ENCODE measurements at regions of chr17 and their contacts with region 1.

Region 1: GRCh38 chr17:7989781-7990655 is 12.4 kb upstream of the GUCY2D start:
- DNase-seq: peak; percentile 40 to 92
- H3K4me3 ChIP-seq: peak overlapping the region; percentile 62
- H3K27ac ChIP-seq: no peak overlapping the region
- H3K4me1 ChIP-seq: no peaks in the 10 kb centered on the region; the same call in 1 of the 2 replicates
- H3K27me3 ChIP-seq: no peaks in the 10 kb centered on the region
- CTCF ChIP-seq: peak; percentile 83

Region 2: DNA sequence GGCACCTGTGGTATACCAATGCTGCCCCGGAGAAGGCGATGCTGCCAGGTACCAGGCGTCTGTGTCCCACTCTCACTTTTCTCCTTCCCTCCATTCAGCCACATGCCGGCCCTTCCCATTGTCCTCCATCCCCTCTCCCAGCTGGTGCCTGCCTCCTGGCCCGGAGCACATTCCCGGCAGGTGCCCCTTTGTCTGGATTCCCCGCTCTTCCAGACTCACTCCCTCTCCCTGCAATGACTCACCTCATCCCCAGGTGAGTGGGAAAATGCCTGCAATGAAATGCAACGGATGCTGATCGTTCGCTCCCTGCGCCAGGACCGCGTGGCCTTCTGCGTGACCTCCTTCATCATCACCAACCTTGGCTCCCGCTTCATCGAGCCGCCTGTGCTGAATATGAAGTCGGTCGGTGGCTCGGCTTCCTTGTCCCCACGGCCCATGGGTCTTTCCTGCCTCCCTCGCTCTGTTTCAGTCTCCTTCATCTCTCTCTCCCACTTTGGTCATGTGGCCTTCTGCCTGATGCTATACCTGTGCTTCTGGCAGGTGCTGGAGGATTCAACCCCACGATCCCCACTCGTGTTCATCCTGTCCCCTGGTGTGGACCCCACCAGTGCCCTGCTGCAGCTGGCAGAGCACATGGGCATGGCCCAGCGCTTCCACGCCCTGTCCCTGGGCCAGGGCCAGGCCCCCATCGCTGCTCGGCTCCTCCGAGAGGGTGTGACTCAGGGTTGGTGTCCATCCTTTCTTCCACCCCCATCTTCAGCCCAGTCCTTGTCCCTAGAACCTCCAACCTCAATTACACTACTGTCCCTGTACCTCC is 166.2 kb before region 1 on chr17:
- CTCF ChIA-PET with region 1: no interaction called
- POLR2A ChIA-PET with region 1: no interaction called
- intact Hi-C with region 1: loop called (anchors 2 kb)
- DNase-seq: no peak
- H3K4me3 ChIP-seq: no peak overlapping the region
- H3K27ac ChIP-seq: no peak overlapping the region
- H3K4me1 ChIP-seq: no peaks in the 10 kb centered on the region
- H3K27me3 ChIP-seq: no peaks in the 10 kb centered on the region
- CTCF ChIP-seq: no peak

Region 3: DNA sequence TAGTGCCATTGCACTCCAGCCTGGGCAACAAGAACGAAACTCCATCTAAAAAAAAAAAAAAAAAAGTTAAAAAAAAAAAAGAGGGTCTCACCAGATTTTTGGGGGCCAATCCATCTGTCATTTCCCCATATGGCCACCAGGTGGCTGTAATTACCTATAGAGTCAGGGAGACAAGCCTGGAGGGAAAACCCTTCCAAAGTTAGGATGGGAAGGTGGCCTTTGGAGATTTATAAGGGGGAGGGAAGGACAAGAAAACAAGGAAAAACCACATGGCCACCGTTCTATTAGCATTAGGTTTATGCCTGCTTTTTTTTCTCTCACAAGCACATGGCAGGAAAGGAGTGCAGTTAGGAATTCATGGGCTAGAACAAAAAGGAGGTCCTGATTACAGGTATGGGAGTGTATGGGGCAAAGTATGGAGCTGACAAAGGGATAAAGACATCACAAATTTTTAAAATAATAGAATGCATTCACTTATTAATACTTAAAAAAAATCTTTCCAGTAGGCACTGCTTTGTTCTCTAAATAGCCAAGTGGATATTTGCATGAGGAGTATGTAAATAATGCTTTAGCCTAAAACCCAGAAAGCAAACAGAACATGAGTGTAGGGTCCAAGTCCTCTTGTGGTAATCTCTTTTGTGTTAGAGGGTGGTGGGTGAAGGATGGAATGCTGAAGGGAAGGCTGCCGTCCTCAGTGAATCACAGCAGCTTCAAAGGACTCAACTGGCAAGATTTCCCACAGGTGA is 127.2 kb before region 1 on chr17:
- CTCF ChIA-PET with region 1: interaction called, 6 read pairs
- POLR2A ChIA-PET with region 1: no interaction called
- intact Hi-C with region 1: loop called (anchors 2 kb)
- DNase-seq: peak in 1 of 2 experiments; percentile 49
- H3K4me3 ChIP-seq: no peak overlapping the region
- H3K27ac ChIP-seq: no peak overlapping the region
- H3K4me1 ChIP-seq: peaks cover 7% of the 10 kb centered on the region; the same call in 1 of the 2 replicates
- H3K27me3 ChIP-seq: no peaks in the 10 kb centered on the region
- CTCF ChIP-seq: peak; percentile 87

Region 4: GRCh38 chr17:7931709-7932482 is 58.1 kb before region 1 on chr17 and contains the starts of genes CNTROB and TRAPPC1:
- CTCF ChIA-PET with region 1: interaction called, 5 read pairs
- POLR2A ChIA-PET with region 1: interaction called, 8 read pairs
- intact Hi-C with region 1: loop called (anchors 1 kb)
- DNase-seq: peak; percentile 87 to 100
- H3K4me3 ChIP-seq: peak within 1 kb of the TSS; percentile 88
- H3K27ac ChIP-seq: no peak within 1 kb of the TSS
- H3K4me1 ChIP-seq: peaks cover 11% of the 10 kb centered on the region
- H3K27me3 ChIP-seq: no peaks in the 10 kb centered on the region
- CTCF ChIP-seq: no peak
- total RNA-seq, gene CNTROB: 62.3 and 65.1 TPM in 2 replicates
- total RNA-seq, gene TRAPPC1: 181 and 224 TPM in 2 replicates

Measured in PC-9 (cell line).